Endothelial cell of umbilical vein (primary cell): ENCODE measurements at regions of chr6 and their contacts with region 1.

Region 1: GRCh38 chr6:49326337-49326736 is 136.7 kb downstream of the MMUT start:
- DNase-seq: peak; percentile 95
- H3K4me3 ChIP-seq: peak overlapping the region in 1 of 3 experiments; percentile 4
- H3K27ac ChIP-seq: peak overlapping the region; percentile 99
- H3K4me1 ChIP-seq: peaks cover 33% of the 10 kb centered on the region
- H3K27me3 ChIP-seq: no peaks in the 10 kb centered on the region
- CTCF ChIP-seq: no peak
- POLR2A ChIP-seq: peak; percentile 44

Region 2: GRCh38 chr6:48826901-48827701 is 499.2 kb before region 1 on chr6:
- CTCF ChIA-PET with region 1: no interaction called
- POLR2A ChIA-PET with region 1: no interaction called
- dilution Hi-C with region 1: no loop called
- intact Hi-C with region 1: loop called (anchors 2 kb)
- DNase-seq: peak; percentile 71
- H3K4me3 ChIP-seq: peak overlapping the region in 2 of 3 experiments; percentile 20 to 28
- H3K27ac ChIP-seq: peak overlapping the region; percentile 94
- H3K4me1 ChIP-seq: peaks cover 25% of the 10 kb centered on the region
- H3K27me3 ChIP-seq: no peaks in the 10 kb centered on the region
- CTCF ChIP-seq: no peak
- POLR2A ChIP-seq: no peak

Region 3: GRCh38 chr6:49087369-49087768 is 239.0 kb before region 1 on chr6:
- CTCF ChIA-PET with region 1: no interaction called
- POLR2A ChIA-PET with region 1: no interaction called
- dilution Hi-C with region 1: no loop called
- intact Hi-C with region 1: no loop called
- DNase-seq: no peak
- H3K4me3 ChIP-seq: no peak overlapping the region
- H3K27ac ChIP-seq: no peak overlapping the region
- H3K4me1 ChIP-seq: no peaks in the 10 kb centered on the region
- H3K27me3 ChIP-seq: no peaks in the 10 kb centered on the region
- CTCF ChIP-seq: no peak
- POLR2A ChIP-seq: no peak

Region 4: DNA sequence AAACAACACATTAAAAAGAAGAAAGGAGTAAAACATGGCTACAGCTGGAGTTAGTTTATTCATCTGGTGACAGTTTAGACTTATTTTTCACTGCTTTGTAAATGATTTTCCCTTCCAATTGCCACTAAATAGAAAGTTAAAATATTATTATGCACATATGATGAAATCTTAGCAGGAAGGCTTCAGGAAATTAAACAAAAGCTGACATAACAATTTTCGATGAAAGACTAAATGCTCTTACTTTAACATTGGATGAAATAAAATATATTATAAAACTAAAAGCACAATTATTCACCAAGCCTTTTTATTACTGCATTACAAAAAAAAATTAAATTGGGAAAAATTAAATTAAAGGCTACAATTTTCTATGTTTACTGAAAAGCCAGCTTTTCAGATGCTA is 21.3 kb before region 1 on chr6:
- CTCF ChIA-PET with region 1: interaction called, 5 read pairs
- POLR2A ChIA-PET with region 1: no interaction called
- dilution Hi-C with region 1: no loop called
- intact Hi-C with region 1: loop called (anchors 1 kb)
- DNase-seq: peak; percentile 33
- H3K4me3 ChIP-seq: peak overlapping the region in 1 of 3 experiments; percentile 33
- H3K27ac ChIP-seq: peak overlapping the region; percentile 20
- H3K4me1 ChIP-seq: peaks cover 14% of the 10 kb centered on the region
- H3K27me3 ChIP-seq: no peaks in the 10 kb centered on the region
- CTCF ChIP-seq: no peak
- POLR2A ChIP-seq: no peak

Region 5: DNA sequence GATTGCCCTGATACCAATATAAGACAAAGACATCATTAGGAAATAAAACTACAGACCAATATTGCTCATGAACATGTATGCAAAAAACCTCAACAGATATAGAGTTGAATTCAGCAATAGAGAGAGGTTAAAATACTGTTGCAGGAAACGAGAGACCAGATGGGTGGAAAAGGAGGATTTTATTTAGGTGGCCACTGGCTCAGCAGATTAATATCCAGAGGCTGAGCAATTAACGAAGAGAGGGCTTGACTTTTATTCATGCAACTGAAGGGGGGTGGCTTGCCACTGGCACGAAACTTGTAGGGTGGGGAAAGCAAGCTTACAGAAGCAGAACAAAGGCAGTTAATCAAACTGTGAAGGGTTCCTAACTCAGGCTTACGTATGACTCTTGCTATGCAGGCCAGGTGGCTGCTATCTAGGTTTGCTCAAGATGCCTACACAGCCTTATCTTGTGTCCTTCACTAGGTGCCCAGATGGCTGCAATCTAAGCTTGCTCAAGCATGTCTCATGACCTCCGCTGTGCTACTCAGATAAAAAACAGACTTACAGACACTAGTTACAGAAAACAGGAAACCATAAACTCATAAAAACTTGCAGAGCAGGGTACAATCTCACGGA is 10.3 kb after region 1 on chr6:
- CTCF ChIA-PET with region 1: interaction called, 4 read pairs
- POLR2A ChIA-PET with region 1: interaction called, 9 read pairs
- dilution Hi-C with region 1: no loop called
- intact Hi-C with region 1: loop called (anchors 1 kb)
- DNase-seq: peak; percentile 92
- H3K4me3 ChIP-seq: no peak overlapping the region
- H3K27ac ChIP-seq: peak overlapping the region; percentile 86
- H3K4me1 ChIP-seq: peaks cover 15% of the 10 kb centered on the region
- H3K27me3 ChIP-seq: no peaks in the 10 kb centered on the region
- CTCF ChIP-seq: no peak
- POLR2A ChIP-seq: peak; percentile 64

Region 6: DNA sequence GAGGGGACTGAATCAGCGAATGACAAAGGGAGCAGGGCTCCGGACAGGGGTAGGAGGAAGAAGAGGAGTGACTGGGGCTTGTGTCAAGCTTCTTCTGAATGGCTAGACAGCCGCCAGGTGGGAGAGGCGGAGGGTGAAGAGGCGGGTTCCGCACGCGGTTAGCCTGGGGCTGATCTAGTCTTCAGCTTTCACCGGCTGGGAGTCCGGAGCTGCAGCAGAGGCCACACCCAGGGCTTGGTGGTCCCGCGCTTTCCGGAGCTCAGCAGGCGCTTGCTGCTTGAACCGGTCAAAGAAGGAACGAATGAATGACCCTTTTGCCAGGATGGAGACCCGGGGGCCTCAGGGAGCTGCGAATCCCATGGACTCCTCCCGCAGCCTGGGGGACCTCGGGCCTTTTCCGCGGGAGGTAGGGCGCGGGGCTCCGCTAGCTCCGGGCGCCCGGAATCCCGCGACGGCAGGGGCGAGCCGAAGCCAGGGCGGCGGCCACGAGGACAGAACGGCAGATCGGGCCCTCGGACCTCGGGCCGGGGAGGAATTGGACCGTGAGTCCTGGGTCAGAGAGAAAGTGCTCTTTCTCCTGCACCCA is 224.2 kb after region 1 on chr6 and contains the start of gene C6orf141:
- CTCF ChIA-PET with region 1: no interaction called
- POLR2A ChIA-PET with region 1: no interaction called
- dilution Hi-C with region 1: no loop called
- intact Hi-C with region 1: loop called (anchors 5 kb)
- DNase-seq: peak; percentile 24
- H3K4me3 ChIP-seq: peak within 1 kb of the TSS; percentile 51 to 71 (median 59)
- H3K27ac ChIP-seq: peak within 1 kb of the TSS; percentile 11
- H3K4me1 ChIP-seq: peaks cover 24% of the 10 kb centered on the region
- H3K27me3 ChIP-seq: peaks cover 0 to 3% of the 10 kb centered on the region in 2 experiments
- CTCF ChIP-seq: no peak
- POLR2A ChIP-seq: no peak
- total RNA-seq, gene C6orf141: 13.7 and 15.5 TPM in 2 replicates

Region 7: DNA sequence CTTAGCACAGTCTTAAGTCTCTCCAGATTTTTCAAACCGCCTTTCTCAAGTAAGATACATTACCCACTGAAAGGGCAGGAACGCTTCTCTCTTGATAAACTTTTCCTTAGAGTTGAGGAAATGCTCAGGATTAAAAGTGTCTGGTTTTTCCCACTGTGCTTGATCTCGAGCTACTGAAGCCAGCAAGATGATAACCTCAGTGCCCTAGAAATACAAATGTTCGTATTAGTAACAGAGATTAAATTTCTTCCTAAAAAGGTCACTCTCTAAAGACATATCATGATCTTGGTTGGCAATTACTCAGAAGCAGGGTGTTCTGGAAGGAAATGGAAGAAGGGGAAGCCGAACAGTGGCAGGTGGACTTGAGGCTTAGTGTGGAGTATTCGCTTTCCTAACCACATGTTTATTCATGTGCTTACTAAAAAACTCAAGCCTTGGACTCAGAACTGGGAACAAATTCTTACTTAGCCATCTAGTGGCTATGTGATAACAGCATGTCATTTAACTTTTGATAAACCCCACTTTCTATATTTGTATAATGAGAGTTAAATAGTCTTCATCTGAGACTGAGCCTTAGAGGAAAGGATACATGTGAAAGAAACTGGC is 244.2 kb after region 1 on chr6:
- CTCF ChIA-PET with region 1: no interaction called
- POLR2A ChIA-PET with region 1: no interaction called
- dilution Hi-C with region 1: no loop called
- intact Hi-C with region 1: loop called (anchors 2 kb)
- DNase-seq: peak; percentile 67
- H3K4me3 ChIP-seq: no peak overlapping the region
- H3K27ac ChIP-seq: peak overlapping the region; percentile 55
- H3K4me1 ChIP-seq: peaks cover 36% of the 10 kb centered on the region
- H3K27me3 ChIP-seq: no peaks in the 10 kb centered on the region
- CTCF ChIP-seq: peak; percentile 20 to 25
- POLR2A ChIP-seq: no peak

Region 8: GRCh38 chr6:50661636-50662035 is 1335.3 kb after region 1 on chr6:
- CTCF ChIA-PET with region 1: no interaction called
- POLR2A ChIA-PET with region 1: no interaction called
- dilution Hi-C with region 1: no loop called
- intact Hi-C with region 1: loop called (anchors 5 kb)
- DNase-seq: peak; percentile 86
- H3K4me3 ChIP-seq: peak overlapping the region in 1 of 3 experiments; percentile 37
- H3K27ac ChIP-seq: peak overlapping the region; percentile 92
- H3K4me1 ChIP-seq: peaks cover 61% of the 10 kb centered on the region
- H3K27me3 ChIP-seq: no peaks in the 10 kb centered on the region
- CTCF ChIP-seq: no peak
- POLR2A ChIP-seq: no peak